ENCODE measurements at regions of chr20 and their contacts with region 1.

Region 1: DNA sequence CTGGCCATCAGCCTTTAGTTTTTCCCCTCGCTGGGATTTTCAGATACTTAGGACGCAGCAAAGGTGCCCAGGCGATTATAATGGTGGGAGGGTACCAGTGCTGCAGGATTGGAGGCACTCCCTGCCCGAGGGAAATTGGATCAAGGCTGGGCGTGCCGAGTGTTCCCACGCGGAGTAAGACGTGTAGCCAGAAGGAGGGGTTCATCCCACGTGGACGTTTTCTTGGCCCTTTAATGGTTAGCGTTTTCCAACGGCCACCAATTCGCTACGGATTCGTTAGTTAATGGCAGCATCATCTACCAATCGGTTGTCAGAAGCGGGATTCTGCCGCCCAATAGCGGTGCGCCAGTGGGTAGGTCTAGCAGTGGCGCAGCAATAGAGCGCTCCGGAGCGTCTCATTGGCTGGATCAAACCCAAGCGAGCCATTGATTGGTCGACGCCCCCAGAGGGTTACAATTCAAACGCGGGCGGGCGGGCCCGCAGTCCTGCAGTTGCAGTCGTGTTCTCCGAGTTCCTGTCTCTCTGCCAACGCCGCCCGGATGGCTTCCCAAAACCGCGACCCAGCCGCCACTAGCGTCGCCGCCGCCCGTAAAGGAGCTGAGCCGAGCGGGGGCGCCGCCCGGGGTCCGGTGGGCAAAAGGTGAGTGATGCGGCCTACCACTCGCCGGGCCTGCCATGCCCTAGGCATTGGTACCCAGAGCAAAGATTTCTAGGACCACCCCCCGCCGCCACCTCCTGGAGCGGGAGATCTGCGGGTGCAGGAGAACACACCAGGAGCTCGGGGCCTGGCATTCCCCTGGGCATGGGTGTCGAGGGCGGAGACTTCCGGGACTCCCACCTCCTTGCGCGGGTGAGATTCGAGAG is at the start of gene UBE2C:
- DNase-seq: peak; percentile 73 to 95 (median 92)
- ATAC-seq: peak; percentile 100
- H3K4me3 ChIP-seq: peak within 1 kb of the TSS; percentile 52
- H3K4me3 Mint-ChIP-seq: peak within 1 kb of the TSS; percentile 79 to 96 (median 84)
- H3K27ac ChIP-seq: peak within 1 kb of the TSS; percentile 63
- H3K27ac Mint-ChIP-seq: peak within 1 kb of the TSS; percentile 36 to 87 (median 71)
- H3K4me1 ChIP-seq: peaks cover 0 to 12% of the 10 kb centered on the region in 2 donors
- H3K4me1 Mint-ChIP-seq: peaks cover 3 to 42% (median 16%) of the 10 kb centered on the region in 7 donors
- H3K27me3 ChIP-seq: no peaks in the 10 kb centered on the region
- H3K27me3 Mint-ChIP-seq: no peaks in the 10 kb centered on the region
- total RNA-seq, gene UBE2C: 0.50 to 129 (median 0.75) TPM in 4 of 5 experiments, not detected in the other

Region 2: GRCh38 chr20:45792332-45792686 is 20.1 kb before region 1 on chr20:
- CTCF ChIA-PET with region 1: no interaction called
- POLR2A ChIA-PET with region 1: no interaction called
- intact Hi-C with region 1: loop called (anchors 1 kb)
- DNase-seq: peak in 1 of 9 donors; percentile 9
- ATAC-seq: peak; percentile 39
- H3K4me3 ChIP-seq: peak overlapping the region; percentile 70
- H3K4me3 Mint-ChIP-seq: peak overlapping the region; percentile 85 to 99 (median 92)
- H3K27ac ChIP-seq: peak overlapping the region; percentile 96
- H3K27ac Mint-ChIP-seq: peak overlapping the region; percentile 87 to 99 (median 93)
- H3K4me1 ChIP-seq: peaks cover 5 to 10% of the 10 kb centered on the region in 2 donors
- H3K4me1 Mint-ChIP-seq: peaks cover 13 to 28% (median 20%) of the 10 kb centered on the region in 7 donors
- H3K27me3 ChIP-seq: no peaks in the 10 kb centered on the region
- H3K27me3 Mint-ChIP-seq: peaks cover 0 to 5% (median 0%) of the 10 kb centered on the region in 5 donors

Region 3: DNA sequence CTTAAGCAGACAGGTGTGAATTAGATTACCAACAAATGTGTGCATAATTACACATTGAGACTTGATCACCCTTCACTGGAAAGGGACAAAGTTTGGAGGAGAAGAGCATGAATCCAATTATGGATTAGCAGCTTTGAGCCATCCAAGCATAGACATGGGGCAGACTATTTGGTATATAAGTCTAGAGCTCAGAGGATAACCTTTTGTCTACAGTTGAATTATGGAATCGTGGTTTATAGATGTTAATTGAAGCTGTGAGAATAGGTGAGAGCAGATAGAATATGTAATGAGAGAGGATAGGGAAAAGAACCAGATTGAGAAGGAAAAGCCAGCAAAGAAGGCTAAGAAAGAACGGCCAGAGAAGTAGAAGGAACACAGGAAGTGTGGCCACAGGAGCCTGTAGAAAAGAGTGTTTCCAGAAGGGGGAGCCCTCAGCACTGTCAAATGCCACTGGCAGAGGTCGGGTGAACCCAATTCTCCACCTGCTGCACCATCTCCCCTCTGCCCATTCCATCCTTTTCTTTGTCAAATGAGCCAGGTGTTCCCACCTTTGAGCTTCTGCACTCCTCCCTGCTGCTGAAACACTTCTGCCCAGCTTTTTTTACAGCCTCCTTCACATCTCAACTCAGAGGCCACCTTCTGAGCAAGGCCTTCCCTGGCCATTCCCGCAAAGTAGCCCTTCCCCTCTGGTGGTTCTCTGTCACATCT is 13.3 kb before region 1 on chr20:
- CTCF ChIA-PET with region 1: no interaction called
- POLR2A ChIA-PET with region 1: interaction called, 7 read pairs
- intact Hi-C with region 1: loop called in 1 of 2 experiments (anchors 1 kb)
- DNase-seq: peak; percentile 25 to 70 (median 58)
- ATAC-seq: peak; percentile 96
- H3K4me3 ChIP-seq: no peak overlapping the region
- H3K4me3 Mint-ChIP-seq: no peak overlapping the region
- H3K27ac ChIP-seq: peak overlapping the region; percentile 24
- H3K27ac Mint-ChIP-seq: peak overlapping the region in 8 of 9 donors; percentile 1 to 92 (median 52)
- H3K4me1 ChIP-seq: peaks cover 4 to 7% of the 10 kb centered on the region in 2 donors
- H3K4me1 Mint-ChIP-seq: peaks cover 9 to 21% (median 11%) of the 10 kb centered on the region in 7 donors
- H3K27me3 ChIP-seq: no peaks in the 10 kb centered on the region
- H3K27me3 Mint-ChIP-seq: no peaks in the 10 kb centered on the region

Region 4: GRCh38 chr20:45833030-45833882 is 20.9 kb after region 1 on chr20 and contains the start of gene SNX21:
- CTCF ChIA-PET with region 1: no interaction called
- POLR2A ChIA-PET with region 1: interaction called, 3 read pairs
- intact Hi-C with region 1: loop called in 1 of 2 experiments (anchors 1 kb)
- DNase-seq: peak in 6 of 9 donors; percentile 20 to 44 (median 22)
- ATAC-seq: peak; percentile 68
- H3K4me3 ChIP-seq: peak within 1 kb of the TSS; percentile 61
- H3K4me3 Mint-ChIP-seq: peak within 1 kb of the TSS; percentile 81 to 95 (median 88)
- H3K27ac ChIP-seq: peak within 1 kb of the TSS; percentile 59
- H3K27ac Mint-ChIP-seq: peak within 1 kb of the TSS in 8 of 9 donors; percentile 26 to 90 (median 80)
- H3K4me1 ChIP-seq: peaks cover 4 to 5% of the 10 kb centered on the region in 2 donors
- H3K4me1 Mint-ChIP-seq: peaks cover 6 to 14% (median 9%) of the 10 kb centered on the region in 7 donors
- H3K27me3 ChIP-seq: no peaks in the 10 kb centered on the region
- H3K27me3 Mint-ChIP-seq: peaks cover 0 to 20% (median 0%) of the 10 kb centered on the region in 5 donors
- total RNA-seq, gene SNX21: 0.93 to 4.9 (median 1.5) TPM

Region 5: DNA sequence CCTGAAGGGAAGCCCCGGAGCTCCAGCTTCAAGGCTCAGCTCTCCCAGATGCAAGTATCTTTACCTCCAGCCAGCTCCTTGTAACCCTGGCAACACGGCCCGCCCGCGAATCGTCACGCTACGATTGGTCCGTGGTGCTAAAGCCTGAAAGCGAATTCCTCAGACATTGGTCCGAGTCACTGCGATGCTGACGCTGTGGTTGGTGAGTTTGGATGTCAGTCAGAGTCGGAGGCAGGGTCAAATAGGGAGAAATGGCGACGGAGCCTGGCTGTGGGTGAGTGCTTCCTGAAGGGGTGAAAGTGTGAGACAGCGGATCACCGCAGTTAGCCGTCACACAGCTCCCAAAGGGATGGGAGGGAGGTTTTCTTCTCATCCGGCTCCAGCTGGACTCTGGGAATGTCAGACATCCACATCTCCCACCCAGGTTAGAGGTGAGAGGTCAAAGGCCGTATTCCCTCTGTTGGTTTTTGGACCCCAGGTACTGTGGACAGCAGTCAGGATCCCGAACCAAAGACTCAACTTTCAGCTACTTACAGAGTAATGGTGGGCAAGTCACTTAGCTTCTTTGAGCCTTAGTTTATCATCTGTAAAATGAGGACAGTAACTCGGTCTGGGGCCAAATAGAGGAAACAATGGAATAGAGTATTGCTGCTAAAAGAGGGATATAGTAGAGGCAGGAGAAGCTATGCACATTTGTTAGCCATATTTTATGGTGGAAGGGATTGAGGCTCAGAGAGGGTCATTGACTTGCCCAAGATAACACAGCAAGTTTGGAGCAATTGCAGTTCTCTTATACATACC is 68.8 kb after region 1 on chr20 and contains the start of gene ZSWIM1:
- CTCF ChIA-PET with region 1: no interaction called
- POLR2A ChIA-PET with region 1: no interaction called
- intact Hi-C with region 1: loop called (anchors 1 kb)
- DNase-seq: peak; percentile 88 to 99 (median 98)
- ATAC-seq: peak; percentile 99
- H3K4me3 ChIP-seq: peak within 1 kb of the TSS; percentile 75
- H3K4me3 Mint-ChIP-seq: peak within 1 kb of the TSS; percentile 83 to 95 (median 92)
- H3K27ac ChIP-seq: peak within 1 kb of the TSS; percentile 95
- H3K27ac Mint-ChIP-seq: peak within 1 kb of the TSS; percentile 91 to 95 (median 93)
- H3K4me1 ChIP-seq: peaks cover 9 to 18% of the 10 kb centered on the region in 2 donors
- H3K4me1 Mint-ChIP-seq: peaks cover 26 to 43% (median 38%) of the 10 kb centered on the region in 7 donors
- H3K27me3 ChIP-seq: no peaks in the 10 kb centered on the region
- H3K27me3 Mint-ChIP-seq: no peaks in the 10 kb centered on the region
- total RNA-seq, gene ZSWIM1: 8.2 to 16.0 (median 9.8) TPM

Measured in naive thymus-derived CD4-positive, alpha-beta T cell (primary cell).